PC-3 (cell line): ENCODE measurements at regions of chr11 and their contacts with region 1.

Region 1: GRCh38 chr11:88337181-88337986 is at the start of gene CTSC:
- DNase-seq: peak; percentile 96
- ATAC-seq: peak; percentile 85
- H3K4me3 ChIP-seq: peak within 1 kb of the TSS; percentile 98
- H3K27ac ChIP-seq: peak within 1 kb of the TSS; percentile 78
- H3K4me1 ChIP-seq: peaks cover 48% of the 10 kb centered on the region
- H3K27me3 ChIP-seq: no peaks in the 10 kb centered on the region
- CTCF ChIP-seq: no peak
- total RNA-seq, gene CTSC: 200 and 240 TPM in 2 replicates

Region 2: DNA sequence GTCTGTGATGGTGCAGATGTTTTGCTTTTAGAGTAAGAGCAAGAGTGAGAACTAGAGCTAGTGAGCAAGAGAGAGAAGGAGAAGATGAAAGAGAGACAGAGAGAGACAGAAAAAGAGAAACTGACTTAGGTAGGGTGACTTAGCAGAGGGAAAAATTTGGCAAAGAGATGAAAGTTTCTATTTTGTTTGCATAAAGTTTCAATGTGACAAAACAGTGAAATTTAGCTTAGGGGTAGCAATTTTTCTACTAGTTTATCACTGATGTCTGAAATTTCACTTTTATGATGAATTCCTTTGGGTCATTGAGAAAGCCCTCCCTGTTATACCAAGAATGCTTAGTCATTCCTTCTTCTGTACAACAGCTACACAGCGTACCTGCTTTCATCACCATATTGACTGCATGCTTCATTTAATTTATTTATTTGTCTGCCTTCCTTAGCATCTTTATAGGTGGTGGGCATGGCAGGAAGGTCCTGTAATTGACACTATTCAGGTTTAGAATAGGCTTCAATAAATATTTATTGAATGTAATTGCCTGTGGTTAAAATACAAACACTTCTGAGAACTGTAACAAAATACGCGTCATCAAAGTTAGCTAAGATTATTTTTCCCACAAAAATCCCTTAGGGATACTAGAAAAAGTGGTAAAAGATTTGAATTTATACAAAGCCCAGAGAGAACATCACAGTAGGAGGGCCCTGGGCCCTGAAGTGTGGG is 20.1 kb after region 1 on chr11:
- CTCF ChIA-PET with region 1: no interaction called
- POLR2A ChIA-PET with region 1: interaction called, 3 read pairs
- intact Hi-C with region 1: loop called (anchors 2 kb)
- DNase-seq: peak; percentile 87
- ATAC-seq: peak; percentile 96
- H3K4me3 ChIP-seq: peak overlapping the region; percentile 15; the same call in 1 of the 2 replicates
- H3K27ac ChIP-seq: peak overlapping the region; percentile 94
- H3K4me1 ChIP-seq: peaks cover 31% of the 10 kb centered on the region
- H3K27me3 ChIP-seq: no peaks in the 10 kb centered on the region
- CTCF ChIP-seq: no peak

Region 3: GRCh38 chr11:88384673-88385005 is 47.3 kb after region 1 on chr11:
- CTCF ChIA-PET with region 1: no interaction called
- POLR2A ChIA-PET with region 1: no interaction called
- intact Hi-C with region 1: loop called (anchors 1 kb)
- DNase-seq: peak; percentile 48
- ATAC-seq: peak; percentile 47
- H3K4me3 ChIP-seq: no peak overlapping the region; the same call in 1 of the 2 replicates
- H3K27ac ChIP-seq: peak overlapping the region; percentile 63
- H3K4me1 ChIP-seq: peaks cover 34% of the 10 kb centered on the region
- H3K27me3 ChIP-seq: no peaks in the 10 kb centered on the region
- CTCF ChIP-seq: no peak

Region 4: GRCh38 chr11:88454881-88455280 is 117.5 kb after region 1 on chr11:
- CTCF ChIA-PET with region 1: no interaction called
- POLR2A ChIA-PET with region 1: no interaction called
- intact Hi-C with region 1: no loop called
- DNase-seq: peak; percentile 48
- ATAC-seq: no peak; the same call in 1 of the 2 replicates
- H3K4me3 ChIP-seq: no peak overlapping the region
- H3K27ac ChIP-seq: no peak overlapping the region
- H3K4me1 ChIP-seq: no peaks in the 10 kb centered on the region
- H3K27me3 ChIP-seq: no peaks in the 10 kb centered on the region
- CTCF ChIP-seq: no peak